ENCODE measurements at regions of chr14 and their contacts with region 1.

Region 1: GRCh38 chr14:23379366-23380196 is 2.7 kb downstream of the CMTM5 start:
- DNase-seq: peak; percentile 3
- ATAC-seq: peak; percentile 96
- H3K4me3 ChIP-seq: no peak overlapping the region
- H3K27ac ChIP-seq: no peak overlapping the region
- H3K4me1 ChIP-seq: no peaks in the 10 kb centered on the region
- H3K27me3 ChIP-seq: no peaks in the 10 kb centered on the region; a peak in 1 of 4 replicates
- CTCF ChIP-seq: peak; percentile 92 to 97 (median 95); a peak in 5 of 6 replicates
- EP300 ChIP-seq: no peak
- POLR2A ChIP-seq: no peak
- RAD21 ChIP-seq: peak; percentile 87

Region 2: GRCh38 chr14:23154964-23155587 is 224.5 kb before region 1 on chr14:
- CTCF ChIA-PET with region 1: no interaction called
- POLR2A ChIA-PET with region 1: no interaction called
- RAD21 ChIA-PET with region 1: no interaction called
- SMC1A ChIA-PET with region 1: no interaction called
- in situ Hi-C with region 1: no loop called
- intact Hi-C with region 1: no loop called
- DNase-seq: no peak
- ATAC-seq: no peak
- H3K4me3 ChIP-seq: no peak overlapping the region
- H3K27ac ChIP-seq: no peak overlapping the region
- H3K4me1 ChIP-seq: no peaks in the 10 kb centered on the region
- H3K27me3 ChIP-seq: peaks cover 2% of the 10 kb centered on the region in 2 experiments; a peak in 3 of 4 replicates
- CTCF ChIP-seq: no peak
- EP300 ChIP-seq: no peak
- POLR2A ChIP-seq: no peak
- RAD21 ChIP-seq: no peak

Region 3: DNA sequence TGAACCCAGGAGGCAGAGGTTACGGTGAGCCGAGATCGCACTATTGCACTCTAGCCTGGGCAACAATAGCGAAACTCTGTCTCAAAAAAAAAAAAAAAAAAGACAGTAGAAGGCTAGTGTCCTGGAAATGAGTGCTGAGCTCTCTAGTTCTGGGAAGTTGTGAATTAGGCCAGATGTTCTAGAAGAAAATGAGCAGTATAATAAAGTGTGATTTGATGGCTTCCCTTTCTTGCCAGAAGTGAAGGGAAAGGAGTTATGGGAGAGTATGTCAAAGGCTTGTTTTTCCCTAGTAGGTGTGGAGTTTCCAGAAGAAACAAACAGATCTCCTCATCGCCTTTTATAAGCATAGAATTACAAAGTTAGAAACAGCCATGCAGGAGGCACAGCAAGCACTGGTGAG is 121.3 kb before region 1 on chr14:
- CTCF ChIA-PET with region 1: interaction called, 52 read pairs
- POLR2A ChIA-PET with region 1: no interaction called
- RAD21 ChIA-PET with region 1: interaction called, 5 read pairs
- SMC1A ChIA-PET with region 1: interaction called, 11 read pairs
- in situ Hi-C with region 1: loop called (anchors 5 kb)
- intact Hi-C with region 1: no loop called
- DNase-seq: no peak
- ATAC-seq: no peak
- H3K4me3 ChIP-seq: no peak overlapping the region
- H3K27ac ChIP-seq: no peak overlapping the region
- H3K4me1 ChIP-seq: no peaks in the 10 kb centered on the region
- H3K27me3 ChIP-seq: no peaks in the 10 kb centered on the region
- CTCF ChIP-seq: no peak
- EP300 ChIP-seq: no peak
- POLR2A ChIP-seq: no peak
- RAD21 ChIP-seq: no peak

Region 4: GRCh38 chr14:23269193-23269592 is 110.4 kb before region 1 on chr14:
- CTCF ChIA-PET with region 1: interaction called, 52 read pairs
- POLR2A ChIA-PET with region 1: no interaction called
- RAD21 ChIA-PET with region 1: interaction called, 5 read pairs
- SMC1A ChIA-PET with region 1: interaction called, 11 read pairs
- in situ Hi-C with region 1: loop called (anchors 5 kb)
- intact Hi-C with region 1: loop called (anchors 1 kb)
- DNase-seq: no peak
- ATAC-seq: no peak
- H3K4me3 ChIP-seq: no peak overlapping the region
- H3K27ac ChIP-seq: no peak overlapping the region
- H3K4me1 ChIP-seq: no peaks in the 10 kb centered on the region
- H3K27me3 ChIP-seq: no peaks in the 10 kb centered on the region
- CTCF ChIP-seq: no peak
- EP300 ChIP-seq: no peak
- POLR2A ChIP-seq: no peak
- RAD21 ChIP-seq: no peak